OCI-LY7 (cell line): ENCODE measurements at regions of chr9 and their contacts with region 1.

Region 1: GRCh38 chr9:98536542-98537173 is 172.1 kb downstream of the GABBR2 start:
- DNase-seq: peak; percentile 5
- H3K4me3 ChIP-seq: no peak overlapping the region
- H3K27ac ChIP-seq: no peak overlapping the region
- H3K4me1 ChIP-seq: no peaks in the 10 kb centered on the region
- CTCF ChIP-seq: peak; percentile 72

Region 2: GRCh38 chr9:98502360-98503325 is 34.0 kb before region 1 on chr9:
- CTCF ChIA-PET with region 1: no interaction called
- POLR2A ChIA-PET with region 1: no interaction called
- intact Hi-C with region 1: no loop called
- DNase-seq: no peak
- H3K4me3 ChIP-seq: no peak overlapping the region
- H3K27ac ChIP-seq: no peak overlapping the region
- H3K4me1 ChIP-seq: no peaks in the 10 kb centered on the region
- CTCF ChIP-seq: no peak

Region 3: DNA sequence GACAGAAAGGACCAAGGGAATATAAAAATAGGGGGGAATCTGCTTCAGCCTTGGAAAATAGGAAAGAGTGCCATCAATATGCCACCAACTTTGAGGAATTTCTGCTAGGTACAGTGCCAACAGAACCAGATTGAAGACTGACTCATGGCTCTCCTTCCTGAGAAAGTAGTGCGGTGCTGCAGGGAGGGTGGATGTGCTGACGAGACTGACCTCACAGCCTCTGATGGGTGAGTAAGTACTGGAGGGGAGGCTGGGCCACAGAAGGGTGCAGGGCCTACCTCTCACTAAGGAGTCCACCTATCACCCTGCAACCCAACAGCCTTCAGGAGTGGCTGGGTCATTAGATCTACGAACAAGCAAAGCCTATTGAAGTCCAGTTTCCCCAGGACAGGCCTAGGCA is 15.5 kb before region 1 on chr9:
- CTCF ChIA-PET with region 1: no interaction called
- POLR2A ChIA-PET with region 1: no interaction called
- intact Hi-C with region 1: no loop called
- DNase-seq: no peak
- H3K4me3 ChIP-seq: no peak overlapping the region
- H3K27ac ChIP-seq: no peak overlapping the region
- H3K4me1 ChIP-seq: no peaks in the 10 kb centered on the region
- CTCF ChIP-seq: no peak

Region 4: DNA sequence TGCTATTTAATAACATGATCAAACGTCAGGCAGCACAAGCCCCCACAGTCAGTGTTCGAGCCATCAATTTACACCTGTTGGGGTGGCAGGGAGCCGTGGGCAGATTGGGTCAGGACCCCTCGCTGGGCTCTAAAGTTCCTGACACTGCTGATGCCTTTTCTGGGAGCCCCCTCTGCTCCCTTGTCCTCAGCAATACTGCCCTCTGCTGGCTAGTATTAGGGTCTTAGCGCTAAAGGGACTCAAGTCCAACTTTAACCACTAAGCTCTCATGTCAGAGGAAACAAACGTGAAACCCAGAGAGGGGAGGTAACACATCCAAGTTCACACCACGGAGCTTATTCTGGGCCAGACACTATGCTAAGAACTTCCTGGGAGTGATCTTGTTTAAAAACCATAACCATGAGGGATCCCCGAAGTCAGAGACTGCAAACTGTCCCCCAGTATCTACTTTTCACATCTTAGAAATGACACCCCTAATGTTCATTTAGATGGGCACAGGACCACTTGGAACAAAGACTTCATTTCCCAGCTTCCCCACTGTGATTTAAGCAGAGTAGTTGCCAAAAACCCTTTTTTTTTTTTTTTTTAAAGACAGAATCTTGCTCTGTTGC is 239.3 kb after region 1 on chr9:
- CTCF ChIA-PET with region 1: no interaction called
- POLR2A ChIA-PET with region 1: no interaction called
- intact Hi-C with region 1: loop called (anchors 2 kb)
- DNase-seq: peak; percentile 72
- H3K4me3 ChIP-seq: no peak overlapping the region
- H3K27ac ChIP-seq: no peak overlapping the region
- H3K4me1 ChIP-seq: no peaks in the 10 kb centered on the region
- CTCF ChIP-seq: peak; percentile 90